Panc1 (cell line): ENCODE measurements at regions of chr15 and their contacts with region 1.

Region 1: DNA sequence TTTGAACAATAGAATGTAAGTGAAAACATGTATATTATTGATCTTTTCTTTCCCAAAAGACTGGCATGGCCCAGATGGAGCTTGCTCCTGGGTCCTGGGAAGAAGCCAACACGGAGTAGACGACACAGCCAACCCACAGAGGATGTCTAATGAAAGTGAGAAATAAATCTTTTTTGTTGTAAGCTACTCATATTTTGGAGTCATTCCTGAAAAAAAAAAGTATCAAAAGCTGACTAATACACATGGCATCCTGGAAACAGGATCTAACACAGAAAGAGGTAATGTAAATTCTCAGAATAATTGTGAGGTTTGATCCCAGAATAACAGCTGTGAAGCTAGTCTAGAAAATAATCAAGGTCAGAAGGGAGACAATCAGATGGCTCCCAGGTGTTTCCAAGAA is 12.6 kb upstream of the FRMD5 start:
- DNase-seq: no peak
- ATAC-seq: no peak
- H3K4me3 ChIP-seq: no peak overlapping the region
- H3K27ac ChIP-seq: no peak overlapping the region
- H3K4me1 ChIP-seq: no peaks in the 10 kb centered on the region
- H3K27me3 ChIP-seq: no peaks in the 10 kb centered on the region
- CTCF ChIP-seq: no peak

Region 2: GRCh38 chr15:43211224-43211735 is 996.4 kb before region 1 on chr15:
- CTCF ChIA-PET with region 1: interaction called, 10 read pairs
- POLR2A ChIA-PET with region 1: no interaction called
- in situ Hi-C with region 1: no loop called
- intact Hi-C with region 1: no loop called
- DNase-seq: no peak
- ATAC-seq: no peak
- H3K4me3 ChIP-seq: no peak overlapping the region
- H3K27ac ChIP-seq: no peak overlapping the region
- H3K4me1 ChIP-seq: no peaks in the 10 kb centered on the region
- H3K27me3 ChIP-seq: peaks cover 3% of the 10 kb centered on the region; the same call in 1 of the 2 replicates
- CTCF ChIP-seq: no peak

Region 3: DNA sequence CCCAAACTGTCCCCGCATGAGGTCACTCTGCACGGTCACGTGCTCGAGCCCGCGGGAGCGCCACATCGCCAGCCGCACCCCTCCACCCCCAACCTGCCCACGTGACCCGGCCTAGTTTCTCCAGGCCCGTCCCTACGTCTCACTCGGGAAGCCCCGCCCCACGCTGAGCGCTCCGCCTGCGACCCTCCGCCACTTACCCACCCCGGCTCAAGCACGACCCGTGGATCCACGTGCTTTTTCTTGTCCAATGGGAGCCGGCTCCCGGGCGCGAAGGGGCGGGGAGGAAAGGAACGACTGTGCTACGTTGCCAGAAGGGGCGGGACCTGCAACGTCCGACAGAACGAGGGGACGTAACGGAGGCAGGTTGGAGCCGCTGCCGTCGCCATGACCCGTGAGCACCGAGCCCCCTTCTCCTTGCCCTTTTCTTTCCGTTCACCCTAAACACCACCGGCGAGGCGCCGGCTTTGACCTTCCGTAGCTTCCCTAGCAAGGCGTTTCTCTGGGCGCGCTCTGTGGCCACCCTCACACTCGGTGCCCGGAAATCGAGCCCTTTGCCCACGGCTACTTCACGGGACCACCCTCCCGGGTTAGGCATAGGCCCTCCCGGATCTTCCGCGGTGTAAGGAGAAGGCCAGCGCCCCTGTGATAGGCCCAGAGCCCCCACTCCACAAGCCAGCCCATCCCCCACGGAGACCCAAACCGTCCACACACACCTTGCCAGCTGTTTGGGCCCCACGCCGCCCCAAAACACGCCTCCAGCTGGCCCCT is 415.5 kb before region 1 on chr15 and contains the start of gene SERF2:
- CTCF ChIA-PET with region 1: no interaction called
- POLR2A ChIA-PET with region 1: no interaction called
- in situ Hi-C with region 1: no loop called
- intact Hi-C with region 1: no loop called
- DNase-seq: peak; percentile 97
- ATAC-seq: peak; percentile 97
- H3K4me3 ChIP-seq: peak within 1 kb of the TSS; percentile 97 to 98
- H3K27ac ChIP-seq: peak within 1 kb of the TSS; percentile 99
- H3K4me1 ChIP-seq: peaks cover 31% of the 10 kb centered on the region
- H3K27me3 ChIP-seq: no peaks in the 10 kb centered on the region
- CTCF ChIP-seq: no peak
- total RNA-seq, gene SERF2: 1,303 TPM

Region 4: GRCh38 chr15:43889042-43889441 is 318.6 kb before region 1 on chr15:
- CTCF ChIA-PET with region 1: no interaction called
- POLR2A ChIA-PET with region 1: no interaction called
- in situ Hi-C with region 1: no loop called
- intact Hi-C with region 1: no loop called
- DNase-seq: no peak
- ATAC-seq: no peak
- H3K4me3 ChIP-seq: no peak overlapping the region
- H3K27ac ChIP-seq: no peak overlapping the region
- H3K4me1 ChIP-seq: no peaks in the 10 kb centered on the region
- H3K27me3 ChIP-seq: no peaks in the 10 kb centered on the region
- CTCF ChIP-seq: no peak

Region 5: GRCh38 chr15:44092221-44092620 is 115.4 kb before region 1 on chr15:
- CTCF ChIA-PET with region 1: no interaction called
- POLR2A ChIA-PET with region 1: no interaction called
- in situ Hi-C with region 1: no loop called
- intact Hi-C with region 1: no loop called
- DNase-seq: no peak
- ATAC-seq: peak; percentile 52; the same call in 1 of the 2 replicates
- H3K4me3 ChIP-seq: no peak overlapping the region
- H3K27ac ChIP-seq: peak overlapping the region; percentile 29; the same call in 1 of the 2 replicates
- H3K4me1 ChIP-seq: peaks cover 27% of the 10 kb centered on the region
- H3K27me3 ChIP-seq: no peaks in the 10 kb centered on the region
- CTCF ChIP-seq: no peak